B cell (primary cell): ENCODE measurements at regions of chrX and their contacts with region 1.

Region 1: GRCh38 chrX:48917139-48918001 is 1.5 kb downstream of the PIM2 start:
- DNase-seq: peak; percentile 92
- ATAC-seq: peak; percentile 46
- H3K4me3 ChIP-seq: peak overlapping the region; percentile 67 to 94 (median 86)
- H3K4me3 Mint-ChIP-seq: peak overlapping the region; percentile 98
- H3K27ac ChIP-seq: peak overlapping the region; percentile 84
- H3K27ac Mint-ChIP-seq: peak overlapping the region; percentile 96
- H3K4me1 ChIP-seq: peaks cover 34 to 56% of the 10 kb centered on the region in 2 donors
- H3K4me1 Mint-ChIP-seq: peaks cover 51% of the 10 kb centered on the region
- H3K27me3 ChIP-seq: no peaks in the 10 kb centered on the region
- H3K27me3 Mint-ChIP-seq: no peaks in the 10 kb centered on the region
- CTCF ChIP-seq: peak; percentile 74

Region 2: GRCh38 chrX:47217642-47218279 is 1699.6 kb before region 1 on chrX:
- CTCF ChIA-PET with region 1: no interaction called
- POLR2A ChIA-PET with region 1: no interaction called
- intact Hi-C with region 1: loop called (anchors 10 kb)
- DNase-seq: peak; percentile 96
- ATAC-seq: peak; percentile 80
- H3K4me3 ChIP-seq: peak overlapping the region; percentile 69 to 83 (median 80)
- H3K4me3 Mint-ChIP-seq: peak overlapping the region; percentile 96
- H3K27ac ChIP-seq: peak overlapping the region; percentile 94 to 99
- H3K27ac Mint-ChIP-seq: peak overlapping the region; percentile 100
- H3K4me1 ChIP-seq: peaks cover 26 to 27% of the 10 kb centered on the region in 2 donors
- H3K4me1 Mint-ChIP-seq: peaks cover 39% of the 10 kb centered on the region
- H3K27me3 ChIP-seq: no peaks in the 10 kb centered on the region
- H3K27me3 Mint-ChIP-seq: no peaks in the 10 kb centered on the region
- CTCF ChIP-seq: no peak

Region 3: GRCh38 chrX:47327902-47328301 is 1589.5 kb before region 1 on chrX:
- CTCF ChIA-PET with region 1: no interaction called
- POLR2A ChIA-PET with region 1: no interaction called
- intact Hi-C with region 1: no loop called
- DNase-seq: no peak
- ATAC-seq: no peak
- H3K4me3 ChIP-seq: no peak overlapping the region
- H3K4me3 Mint-ChIP-seq: no peak overlapping the region
- H3K27ac ChIP-seq: no peak overlapping the region
- H3K27ac Mint-ChIP-seq: no peak overlapping the region
- H3K4me1 ChIP-seq: no peaks in the 10 kb centered on the region
- H3K4me1 Mint-ChIP-seq: no peaks in the 10 kb centered on the region
- H3K27me3 ChIP-seq: no peaks in the 10 kb centered on the region
- H3K27me3 Mint-ChIP-seq: no peaks in the 10 kb centered on the region
- CTCF ChIP-seq: no peak

Region 4: DNA sequence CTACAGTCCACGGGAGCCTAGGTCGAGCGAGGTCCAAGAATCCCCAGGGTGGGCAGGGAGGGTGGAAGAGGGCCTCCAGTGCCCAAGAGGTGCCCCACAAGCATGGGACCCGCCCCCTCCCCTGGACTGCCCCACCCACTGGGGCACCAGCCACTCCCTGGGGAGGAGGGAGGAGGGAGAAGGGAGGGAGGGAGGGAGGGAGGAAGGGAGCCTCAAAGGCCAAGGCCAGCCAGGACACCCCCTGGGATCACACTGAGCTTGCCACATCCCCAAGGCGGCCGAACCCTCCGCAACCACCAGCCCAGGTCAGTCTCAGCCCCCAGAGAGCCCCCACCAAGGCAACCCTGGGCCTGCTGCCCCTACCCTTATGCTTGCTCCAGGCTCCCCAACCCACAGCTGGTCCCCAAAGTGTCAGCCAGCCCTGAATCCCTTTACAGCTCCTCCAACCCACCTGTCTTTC is 131.0 kb before region 1 on chrX and contains the start of gene GATA1:
- CTCF ChIA-PET with region 1: no interaction called
- POLR2A ChIA-PET with region 1: no interaction called
- intact Hi-C with region 1: no loop called
- DNase-seq: no peak
- ATAC-seq: no peak
- H3K4me3 ChIP-seq: no peak within 1 kb of the TSS
- H3K4me3 Mint-ChIP-seq: no peak within 1 kb of the TSS
- H3K27ac ChIP-seq: no peak within 1 kb of the TSS
- H3K27ac Mint-ChIP-seq: no peak within 1 kb of the TSS
- H3K4me1 ChIP-seq: no peaks in the 10 kb centered on the region
- H3K4me1 Mint-ChIP-seq: no peaks in the 10 kb centered on the region
- H3K27me3 ChIP-seq: no peaks in the 10 kb centered on the region
- H3K27me3 Mint-ChIP-seq: peaks cover 12% of the 10 kb centered on the region
- CTCF ChIP-seq: no peak
- total RNA-seq, gene GATA1: not detected in 2 replicates

Region 5: GRCh38 chrX:48801280-48802088 is 115.9 kb before region 1 on chrX and contains the start of gene HDAC6:
- CTCF ChIA-PET with region 1: no interaction called
- POLR2A ChIA-PET with region 1: interaction called, 3 read pairs
- intact Hi-C with region 1: loop called (anchors 1 kb)
- DNase-seq: peak; percentile 97
- ATAC-seq: peak; percentile 80
- H3K4me3 ChIP-seq: peak within 1 kb of the TSS; percentile 65 to 82 (median 76)
- H3K4me3 Mint-ChIP-seq: peak within 1 kb of the TSS; percentile 96
- H3K27ac ChIP-seq: peak within 1 kb of the TSS; percentile 95 to 96
- H3K27ac Mint-ChIP-seq: peak within 1 kb of the TSS; percentile 98
- H3K4me1 ChIP-seq: peaks cover 4 to 16% of the 10 kb centered on the region in 2 donors
- H3K4me1 Mint-ChIP-seq: peaks cover 14% of the 10 kb centered on the region
- H3K27me3 ChIP-seq: no peaks in the 10 kb centered on the region
- H3K27me3 Mint-ChIP-seq: no peaks in the 10 kb centered on the region
- CTCF ChIP-seq: no peak
- total RNA-seq, gene HDAC6: 168 and 170 TPM in 2 replicates

Region 6: DNA sequence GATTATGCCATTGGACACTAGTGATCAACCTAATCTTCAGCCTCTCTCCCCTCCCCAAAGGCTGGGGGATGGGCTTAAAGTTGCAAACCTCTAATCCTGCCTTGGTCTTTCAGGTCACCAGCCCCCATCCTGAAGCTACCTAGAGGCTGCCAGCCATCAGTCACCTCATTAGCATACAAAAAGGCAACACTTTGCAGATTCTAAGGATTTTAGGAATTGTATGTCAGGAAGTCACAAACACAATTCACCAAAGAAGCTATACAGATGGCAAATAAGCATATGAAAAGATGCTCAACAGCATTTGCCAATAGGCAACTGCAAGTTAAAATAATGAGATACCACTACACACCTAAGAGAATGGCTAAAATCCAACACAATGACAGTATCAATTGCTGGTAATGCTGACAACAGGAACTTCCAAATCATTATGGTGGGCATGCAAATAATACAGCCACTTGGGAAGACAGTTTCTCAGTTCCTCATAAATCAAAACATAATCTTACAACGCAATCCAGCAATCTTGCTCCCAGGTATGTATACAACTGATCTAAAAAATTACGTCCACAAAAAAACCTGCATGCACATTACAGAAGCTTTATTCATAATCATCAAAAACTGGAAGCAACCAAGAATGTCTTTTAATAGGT is 10.5 kb after region 1 on chrX:
- CTCF ChIA-PET with region 1: no interaction called
- POLR2A ChIA-PET with region 1: interaction called, 5 read pairs
- intact Hi-C with region 1: loop called (anchors 1 kb)
- DNase-seq: peak; percentile 26
- ATAC-seq: peak; percentile 47
- H3K4me3 ChIP-seq: peak overlapping the region in 1 of 5 experiments; percentile 22
- H3K4me3 Mint-ChIP-seq: peak overlapping the region; percentile 59
- H3K27ac ChIP-seq: peak overlapping the region in 1 of 2 donors; percentile 17
- H3K27ac Mint-ChIP-seq: peak overlapping the region; percentile 74
- H3K4me1 ChIP-seq: peaks cover 29 to 35% of the 10 kb centered on the region in 2 donors
- H3K4me1 Mint-ChIP-seq: peaks cover 37% of the 10 kb centered on the region
- H3K27me3 ChIP-seq: no peaks in the 10 kb centered on the region
- H3K27me3 Mint-ChIP-seq: no peaks in the 10 kb centered on the region
- CTCF ChIP-seq: no peak

Region 7: DNA sequence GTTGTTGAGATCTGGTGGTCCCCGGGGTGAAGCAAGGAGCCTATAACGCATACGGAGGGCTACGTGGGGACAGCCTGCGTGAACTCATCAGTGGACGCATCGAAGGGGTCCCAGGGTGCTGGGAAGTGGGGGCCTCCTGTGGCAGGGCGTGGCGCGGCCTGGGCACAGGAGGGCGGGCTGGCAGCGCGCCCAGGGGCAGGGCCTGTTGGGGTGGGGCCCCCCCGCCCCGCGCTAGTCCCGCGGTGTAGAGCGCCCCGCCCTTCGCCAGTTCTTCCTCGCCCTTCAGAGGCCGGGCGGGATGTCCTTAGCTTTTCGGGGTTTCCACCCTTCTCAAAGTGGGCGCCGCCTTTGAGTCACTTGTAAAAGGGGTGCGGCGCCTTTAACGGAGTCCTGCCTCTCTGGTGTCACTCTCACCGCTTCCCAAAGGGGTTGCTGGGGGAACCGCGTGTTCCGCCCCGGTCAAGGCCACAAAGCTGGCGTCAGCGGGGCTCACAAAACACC is 255.0 kb after region 1 on chrX:
- CTCF ChIA-PET with region 1: no interaction called
- POLR2A ChIA-PET with region 1: no interaction called
- intact Hi-C with region 1: loop called (anchors 5 kb)
- DNase-seq: peak; percentile 81
- ATAC-seq: peak; percentile 75
- H3K4me3 ChIP-seq: peak overlapping the region; percentile 53 to 74 (median 71)
- H3K4me3 Mint-ChIP-seq: peak overlapping the region; percentile 90
- H3K27ac ChIP-seq: peak overlapping the region; percentile 74 to 84
- H3K27ac Mint-ChIP-seq: peak overlapping the region; percentile 92
- H3K4me1 ChIP-seq: peaks cover 15 to 45% of the 10 kb centered on the region in 2 donors
- H3K4me1 Mint-ChIP-seq: peaks cover 44% of the 10 kb centered on the region
- H3K27me3 ChIP-seq: no peaks in the 10 kb centered on the region
- H3K27me3 Mint-ChIP-seq: no peaks in the 10 kb centered on the region
- CTCF ChIP-seq: no peak

Region 8: DNA sequence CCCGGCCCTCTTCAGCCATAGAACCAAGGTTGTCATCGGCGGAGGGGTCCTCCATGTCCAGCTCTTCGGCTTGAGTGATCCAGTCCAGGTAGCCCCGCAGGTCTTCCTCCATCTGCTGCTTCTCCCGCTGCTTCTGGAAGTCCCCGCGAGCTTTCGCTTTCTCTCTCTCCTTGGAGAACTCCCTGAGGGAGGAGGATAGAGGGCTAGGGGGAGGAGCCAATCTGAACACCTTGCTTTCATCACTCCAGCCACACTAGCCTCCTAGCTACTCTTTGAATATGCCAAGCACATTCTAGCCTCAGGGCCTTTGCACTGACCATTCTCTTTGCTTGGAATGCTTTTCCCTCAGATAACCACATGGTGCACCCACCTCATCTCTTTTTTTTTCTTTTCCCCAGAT is 309.6 kb after region 1 on chrX:
- CTCF ChIA-PET with region 1: no interaction called
- POLR2A ChIA-PET with region 1: no interaction called
- intact Hi-C with region 1: no loop called
- DNase-seq: no peak
- ATAC-seq: no peak
- H3K4me3 ChIP-seq: no peak overlapping the region
- H3K4me3 Mint-ChIP-seq: no peak overlapping the region
- H3K27ac ChIP-seq: no peak overlapping the region
- H3K27ac Mint-ChIP-seq: no peak overlapping the region
- H3K4me1 ChIP-seq: peaks cover 5 to 17% of the 10 kb centered on the region in 2 donors
- H3K4me1 Mint-ChIP-seq: peaks cover 12% of the 10 kb centered on the region
- H3K27me3 ChIP-seq: no peaks in the 10 kb centered on the region
- H3K27me3 Mint-ChIP-seq: no peaks in the 10 kb centered on the region
- CTCF ChIP-seq: no peak